ENCODE measurements at regions of chr14 and their contacts with region 1.

Region 1: DNA sequence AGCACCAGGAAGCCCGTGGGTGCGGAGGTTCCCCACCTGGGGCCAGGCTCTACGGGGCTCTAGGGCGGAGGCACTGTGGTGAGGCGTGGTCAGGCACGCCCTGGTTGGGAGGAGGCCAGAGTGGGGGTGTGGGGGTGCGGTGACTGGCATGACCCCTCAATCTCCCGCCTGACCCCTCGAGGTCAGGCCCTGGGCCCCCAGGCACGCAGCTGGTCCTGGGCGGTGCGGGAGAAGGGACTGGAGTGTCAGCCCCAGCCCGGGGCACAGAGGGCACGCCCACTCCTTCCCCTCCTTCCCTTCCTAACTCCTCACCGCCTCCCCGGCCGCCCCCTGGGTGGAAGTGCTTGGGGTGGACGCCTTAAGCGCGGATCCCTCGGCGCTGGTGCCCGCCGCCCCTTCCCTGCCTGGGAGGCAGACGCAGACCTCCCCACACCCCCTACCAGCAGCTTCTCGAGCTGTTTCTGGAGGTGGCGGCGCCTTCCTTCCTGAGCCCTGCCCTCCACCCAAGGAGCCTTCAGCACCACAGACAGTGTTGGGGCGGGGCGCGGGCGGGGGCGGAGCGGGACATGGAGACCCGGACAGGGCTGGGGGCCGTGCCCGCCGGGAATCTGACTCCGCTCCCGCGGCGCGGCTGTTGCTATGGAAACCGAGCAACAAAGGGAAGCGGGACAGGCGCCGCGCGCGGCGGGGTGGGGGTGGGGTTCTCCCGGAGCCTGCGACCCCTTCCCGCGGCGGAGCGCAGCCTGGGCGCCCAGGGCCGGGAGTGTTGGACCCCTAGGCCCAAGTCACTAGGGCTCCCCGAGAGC is 741 bp upstream of the CRIP2 start:
- DNase-seq: peak in 1 of 2 experiments; percentile 96
- H3K4me3 ChIP-seq: peak overlapping the region; percentile 40 to 65 (median 52)
- H3K27ac ChIP-seq: no peak overlapping the region
- H3K4me1 ChIP-seq: peaks cover 0 to 35% (median 20%) of the 10 kb centered on the region in 4 experiments; a peak in 6 of 7 replicates
- H3K27me3 ChIP-seq: peaks cover 34 to 48% (median 41%) of the 10 kb centered on the region in 4 experiments
- CTCF ChIP-seq: no peak
- EP300 ChIP-seq: peak in 1 of 2 experiments; percentile 55; a peak in 1 of 3 replicates
- POLR2A ChIP-seq: no peak
- RAD21 ChIP-seq: no peak

Region 2: GRCh38 chr14:105368965-105369652 is 104.8 kb before region 1 on chr14:
- CTCF ChIA-PET with region 1: interaction called, 13 read pairs
- POLR2A ChIA-PET with region 1: no interaction called
- DNase-seq: no peak
- H3K4me3 ChIP-seq: no peak overlapping the region
- H3K27ac ChIP-seq: no peak overlapping the region
- H3K4me1 ChIP-seq: no peaks in the 10 kb centered on the region
- H3K27me3 ChIP-seq: no peaks in the 10 kb centered on the region; a peak in 1 of 7 replicates
- CTCF ChIP-seq: no peak
- EP300 ChIP-seq: no peak
- POLR2A ChIP-seq: no peak
- RAD21 ChIP-seq: no peak

Region 3: DNA sequence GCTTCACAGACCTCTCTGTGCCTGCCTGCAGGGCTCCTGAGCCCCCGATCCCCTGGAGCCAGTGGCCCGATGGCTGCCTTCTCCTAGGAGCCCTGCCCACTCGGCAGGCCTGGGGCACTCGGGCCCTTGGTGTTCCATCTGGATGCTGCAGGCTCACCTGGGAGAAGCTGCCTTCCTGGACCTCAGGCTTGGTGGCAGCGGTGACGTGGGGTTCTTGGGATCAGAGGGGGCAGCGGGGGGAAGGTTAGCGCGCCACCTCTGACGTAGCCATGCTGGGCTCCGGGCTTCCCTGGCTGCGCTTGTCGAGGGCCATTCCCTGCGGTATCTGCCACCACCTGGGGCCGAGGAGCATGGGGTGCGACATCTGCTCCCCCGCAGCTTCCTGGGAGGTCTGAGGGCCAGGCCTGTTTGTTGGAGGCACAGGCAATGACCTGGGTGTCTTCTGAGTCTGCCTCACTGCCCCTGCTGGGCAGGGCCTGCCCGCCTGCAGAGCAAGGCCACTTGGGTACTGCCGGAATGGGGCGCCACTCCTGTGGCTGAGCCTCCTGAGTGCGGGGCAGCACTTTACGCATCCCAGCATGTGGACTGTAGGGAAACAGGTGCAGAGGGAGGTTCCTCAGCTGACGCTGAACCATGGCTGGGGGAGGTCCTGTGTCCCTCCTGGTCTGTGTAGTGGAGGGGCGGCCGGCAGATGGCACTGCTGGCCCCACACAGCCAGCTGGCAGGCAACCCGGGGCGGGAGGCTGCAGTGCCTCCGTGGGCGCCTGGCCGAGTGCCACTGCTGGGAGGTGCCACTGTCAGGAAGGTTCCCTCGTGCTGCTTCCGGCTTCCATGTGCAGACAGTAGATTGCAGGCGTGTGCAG is 34.0 kb before region 1 on chr14:
- CTCF ChIA-PET with region 1: interaction called, 10 read pairs
- POLR2A ChIA-PET with region 1: interaction called, 3 read pairs
- DNase-seq: no peak
- H3K4me3 ChIP-seq: no peak overlapping the region
- H3K27ac ChIP-seq: no peak overlapping the region
- H3K4me1 ChIP-seq: peaks cover 0 to 3% (median 0%) of the 10 kb centered on the region in 4 experiments; a peak in 2 of 7 replicates
- H3K27me3 ChIP-seq: no peaks in the 10 kb centered on the region
- CTCF ChIP-seq: peak in 1 of 3 experiments; percentile 18; a peak in 1 of 4 replicates
- EP300 ChIP-seq: no peak
- POLR2A ChIP-seq: no peak
- RAD21 ChIP-seq: 0 out of 4 replicates have a peak, but pooled peaks of 1 of the 2 experiments have one; percentile 7

Region 4: DNA sequence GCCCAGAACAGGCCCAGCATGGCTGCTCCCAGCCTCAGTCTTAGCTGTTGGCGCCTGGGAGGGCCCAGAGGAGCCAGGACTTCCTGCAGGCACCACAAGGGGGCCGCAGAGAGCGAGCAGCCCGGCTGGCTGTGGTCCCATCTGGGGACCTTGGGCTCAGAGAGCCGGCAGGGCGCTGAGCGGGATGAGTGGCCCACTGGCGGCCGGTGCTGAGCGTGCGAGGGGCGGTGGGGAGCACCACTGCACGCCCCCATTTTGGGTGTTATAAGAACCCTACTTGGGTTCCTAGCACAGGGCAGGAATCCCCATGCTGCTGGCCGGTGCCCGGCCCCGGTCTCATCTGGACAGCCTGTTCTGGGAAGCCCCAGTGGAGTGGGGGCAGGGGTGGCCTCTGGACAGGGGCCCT is 25.2 kb before region 1 on chr14:
- CTCF ChIA-PET with region 1: interaction called, 27 read pairs
- POLR2A ChIA-PET with region 1: interaction called, 21 read pairs
- DNase-seq: peak; percentile 21 to 90
- H3K4me3 ChIP-seq: no peak overlapping the region
- H3K27ac ChIP-seq: no peak overlapping the region
- H3K4me1 ChIP-seq: no peaks in the 10 kb centered on the region
- H3K27me3 ChIP-seq: no peaks in the 10 kb centered on the region
- CTCF ChIP-seq: peak in 2 of 3 experiments; percentile 78 to 85; a peak in 3 of 4 replicates
- EP300 ChIP-seq: no peak
- POLR2A ChIP-seq: no peak
- RAD21 ChIP-seq: peak; percentile 43 to 65; a peak in 3 of 4 replicates

Region 5: DNA sequence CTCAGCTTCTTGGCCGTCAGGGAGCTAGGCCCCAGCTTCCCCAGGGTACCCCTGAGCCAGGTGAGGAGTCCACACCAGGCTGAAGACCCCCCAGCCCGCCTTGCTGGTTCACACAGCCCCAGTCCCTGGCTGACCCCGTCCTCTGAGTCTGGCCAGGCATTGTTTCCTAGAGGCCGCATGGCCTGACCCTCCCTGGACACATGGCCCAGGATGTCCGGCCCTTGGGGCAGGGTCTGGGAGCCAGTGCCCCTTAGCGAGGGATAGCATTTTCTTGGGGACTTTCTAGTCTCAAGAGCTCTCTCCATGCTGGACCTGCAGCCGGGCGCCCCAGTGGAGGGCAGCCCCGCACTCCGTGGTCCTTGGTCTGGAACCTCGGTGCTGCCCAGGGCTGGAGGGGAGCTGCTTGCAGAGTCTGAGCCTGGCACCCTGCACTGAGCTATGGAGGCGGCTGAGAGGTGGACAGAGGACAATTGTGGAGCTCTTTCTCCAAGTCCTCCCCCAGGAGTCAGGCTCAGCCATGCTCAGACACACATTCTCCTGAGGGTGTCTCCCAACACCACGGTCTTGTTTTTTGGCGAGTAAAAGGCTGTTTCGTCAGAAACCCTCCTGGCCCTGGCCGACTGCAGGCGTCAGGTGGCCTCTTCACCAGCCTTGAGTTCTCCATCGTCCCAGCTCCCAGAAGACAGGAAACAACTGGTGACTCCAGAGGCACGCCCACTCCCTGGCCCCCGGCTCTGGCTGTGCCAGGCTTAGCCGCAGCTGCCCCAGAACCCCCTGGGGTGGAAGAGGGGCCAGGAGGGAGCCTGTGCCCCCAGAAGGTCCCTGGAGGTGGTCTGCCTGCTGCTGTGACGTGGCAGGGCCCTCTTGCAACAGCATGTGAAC is 16.9 kb before region 1 on chr14:
- CTCF ChIA-PET with region 1: interaction called, 27 read pairs
- POLR2A ChIA-PET with region 1: interaction called, 6 read pairs
- DNase-seq: no peak
- H3K4me3 ChIP-seq: no peak overlapping the region
- H3K27ac ChIP-seq: peak overlapping the region; percentile 33; the same call in 1 of the 2 replicates
- H3K4me1 ChIP-seq: 0 out of 7 replicates have a peak, but pooled peaks cover 0 to 3% (median 0%) of the 10 kb centered on the region in 4 experiments
- H3K27me3 ChIP-seq: no peaks in the 10 kb centered on the region
- CTCF ChIP-seq: no peak
- EP300 ChIP-seq: no peak
- POLR2A ChIP-seq: no peak
- RAD21 ChIP-seq: no peak

Region 6: DNA sequence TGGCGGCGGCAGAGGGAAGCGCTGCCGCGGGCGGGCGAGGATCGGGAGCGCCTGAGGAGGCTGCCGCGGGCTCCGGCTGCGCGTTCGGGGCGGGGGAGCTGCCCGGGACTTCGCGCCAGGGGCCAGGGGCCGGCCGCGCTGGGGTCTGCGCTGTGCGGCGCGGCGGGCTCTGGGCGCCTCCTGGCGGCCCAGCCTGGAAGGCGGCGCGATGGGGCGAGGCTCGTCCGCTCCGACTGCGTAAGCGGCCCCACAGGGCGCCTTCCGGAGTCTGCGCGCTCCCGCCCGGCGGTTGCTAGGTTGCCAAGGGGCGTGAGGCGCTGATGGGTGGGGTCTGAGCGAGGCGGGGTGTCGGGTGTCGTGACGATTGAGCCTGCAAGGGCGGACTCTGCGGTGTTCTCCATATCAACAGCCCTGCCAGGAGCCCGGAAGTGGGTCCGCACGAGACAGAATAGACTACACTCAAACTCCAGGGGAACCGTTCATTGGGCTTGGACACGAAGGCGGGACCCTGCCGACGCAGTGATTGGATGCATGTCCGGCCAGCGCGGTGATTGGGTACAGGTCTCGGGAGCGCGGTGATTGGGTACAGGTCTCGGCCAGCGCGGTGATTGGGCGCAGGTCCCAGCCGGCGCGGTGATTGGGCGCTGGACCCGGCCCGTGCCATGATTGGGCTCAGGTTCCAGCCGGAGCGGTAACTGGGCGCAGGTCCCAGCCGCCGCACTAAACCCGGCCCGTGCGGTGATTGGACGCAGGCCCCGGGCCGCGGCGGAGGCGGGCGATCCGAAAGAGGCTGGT is 16.9 kb after region 1 on chr14 and contains the start of gene TEDC1:
- CTCF ChIA-PET with region 1: interaction called, 32 read pairs
- POLR2A ChIA-PET with region 1: interaction called, 9 read pairs
- DNase-seq: peak; percentile 90 to 92
- H3K4me3 ChIP-seq: peak within 1 kb of the TSS; percentile 37 to 91 (median 70)
- H3K27ac ChIP-seq: peak within 1 kb of the TSS; percentile 73; the same call in 1 of the 2 replicates
- H3K4me1 ChIP-seq: peaks cover 0 to 20% (median 5%) of the 10 kb centered on the region in 4 experiments; a peak in 5 of 7 replicates
- H3K27me3 ChIP-seq: peaks cover 25 to 33% (median 32%) of the 10 kb centered on the region in 4 experiments
- CTCF ChIP-seq: peak in 2 of 3 experiments; percentile 79 to 91; a peak in 3 of 4 replicates
- EP300 ChIP-seq: no peak
- POLR2A ChIP-seq: peak in 1 of 2 experiments; percentile 94; a peak in 2 of 3 replicates
- RAD21 ChIP-seq: peak; percentile 51 to 74
- total RNA-seq, gene TEDC1: 5.6 and 6.4 TPM in 2 replicates

Region 7: GRCh38 chr14:105562713-105563346 is 89.0 kb after region 1 on chr14:
- CTCF ChIA-PET with region 1: no interaction called
- POLR2A ChIA-PET with region 1: no interaction called
- DNase-seq: no peak
- H3K4me3 ChIP-seq: no peak overlapping the region
- H3K27ac ChIP-seq: no peak overlapping the region
- H3K4me1 ChIP-seq: no peaks in the 10 kb centered on the region
- H3K27me3 ChIP-seq: no peaks in the 10 kb centered on the region
- CTCF ChIP-seq: no peak
- EP300 ChIP-seq: no peak
- POLR2A ChIP-seq: no peak
- RAD21 ChIP-seq: no peak